ENCODE measurements at regions of chr1 and their contacts with region 1.

Region 1: GRCh38 chr1:100459358-100460114 is 78.4 kb upstream of the GPR88 start:
- DNase-seq: peak; percentile 34 to 62 (median 53)
- ATAC-seq: peak; percentile 87
- H3K4me3 ChIP-seq: no peak overlapping the region
- H3K4me3 Mint-ChIP-seq: peak overlapping the region in 8 of 10 donors; percentile 15 to 65 (median 40)
- H3K27ac ChIP-seq: no peak overlapping the region
- H3K27ac Mint-ChIP-seq: peak overlapping the region; percentile 11 to 93 (median 74)
- H3K4me1 ChIP-seq: peaks cover 18 to 22% of the 10 kb centered on the region in 2 donors
- H3K4me1 Mint-ChIP-seq: peaks cover 21 to 81% (median 59%) of the 10 kb centered on the region in 7 donors
- H3K27me3 ChIP-seq: no peaks in the 10 kb centered on the region
- H3K27me3 Mint-ChIP-seq: no peaks in the 10 kb centered on the region

Region 2: DNA sequence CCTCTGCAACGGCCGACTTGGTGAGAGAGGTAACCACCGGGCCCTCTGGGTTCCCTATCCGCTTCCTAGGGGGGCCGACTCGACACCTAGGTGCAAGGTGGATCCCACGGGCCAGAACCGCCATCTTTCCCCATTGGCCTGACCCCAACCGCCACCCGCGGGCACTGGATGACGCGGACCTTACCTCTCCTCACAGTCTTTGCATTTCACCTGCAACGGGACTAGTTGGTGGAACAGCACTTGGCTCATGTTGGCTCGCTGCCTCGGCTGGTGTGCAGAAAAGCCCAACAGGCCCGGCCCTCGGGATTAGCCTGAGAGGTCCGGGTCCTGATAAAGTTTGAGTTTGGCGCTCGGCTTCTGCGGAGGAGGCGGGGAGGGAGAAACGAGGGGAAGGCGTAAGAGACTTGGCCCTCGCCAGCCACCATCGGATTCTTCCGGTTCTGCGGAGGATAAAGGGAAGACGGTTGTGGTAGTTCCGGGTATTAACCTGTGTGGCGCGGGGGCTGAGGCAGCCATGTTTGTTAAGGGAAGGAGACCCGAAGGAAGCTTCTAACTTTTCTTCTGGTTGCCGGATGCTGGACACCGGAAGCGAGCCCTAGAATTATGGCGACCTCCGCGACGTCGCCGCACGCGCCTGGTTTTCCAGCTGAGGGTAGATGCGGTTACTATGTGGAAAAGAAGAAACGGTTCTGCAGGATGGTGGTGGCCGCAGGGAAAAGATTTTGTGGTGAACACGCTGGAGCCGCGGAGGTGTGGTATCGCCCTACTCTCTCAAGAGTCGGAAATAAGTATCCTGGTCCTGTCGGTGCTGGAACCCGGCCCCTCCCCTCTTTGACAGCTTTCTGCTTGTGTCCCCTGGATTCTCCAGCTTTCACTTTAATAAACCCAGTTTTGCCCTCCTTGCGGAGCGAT is 326.7 kb before region 1 on chr1 and contains the starts of genes SASS6 and TRMT13:
- CTCF ChIA-PET with region 1: no interaction called
- POLR2A ChIA-PET with region 1: no interaction called
- intact Hi-C with region 1: loop called (anchors 2 to 5 kb)
- DNase-seq: peak; percentile 73 to 96 (median 94)
- ATAC-seq: peak; percentile 99
- H3K4me3 ChIP-seq: peak within 1 kb of the TSS; percentile 92
- H3K4me3 Mint-ChIP-seq: peak within 1 kb of the TSS; percentile 90 to 99 (median 98)
- H3K27ac ChIP-seq: peak within 1 kb of the TSS; percentile 74
- H3K27ac Mint-ChIP-seq: peak within 1 kb of the TSS; percentile 86 to 99 (median 96)
- H3K4me1 ChIP-seq: peaks cover 9 to 15% of the 10 kb centered on the region in 2 donors
- H3K4me1 Mint-ChIP-seq: peaks cover 7 to 53% (median 39%) of the 10 kb centered on the region in 7 donors
- H3K27me3 ChIP-seq: no peaks in the 10 kb centered on the region
- H3K27me3 Mint-ChIP-seq: no peaks in the 10 kb centered on the region
- total RNA-seq, gene SASS6: 2.5 to 11.6 (median 5.6) TPM
- total RNA-seq, gene TRMT13: 15.3 to 60.3 (median 23.9) TPM

Region 3: GRCh38 chr1:100265931-100266740 is 193.4 kb before region 1 on chr1 and contains the start of gene RTCA:
- CTCF ChIA-PET with region 1: interaction called, 5 read pairs
- POLR2A ChIA-PET with region 1: interaction called, 9 read pairs
- intact Hi-C with region 1: loop called in 1 of 2 experiments (anchors 1 kb)
- DNase-seq: peak; percentile 91 to 95 (median 94)
- ATAC-seq: peak; percentile 98
- H3K4me3 ChIP-seq: peak within 1 kb of the TSS; percentile 88
- H3K4me3 Mint-ChIP-seq: peak within 1 kb of the TSS; percentile 97 to 100 (median 100)
- H3K27ac ChIP-seq: peak within 1 kb of the TSS; percentile 88
- H3K27ac Mint-ChIP-seq: peak within 1 kb of the TSS; percentile 94 to 99 (median 97)
- H3K4me1 ChIP-seq: peaks cover 25 to 26% of the 10 kb centered on the region in 2 donors
- H3K4me1 Mint-ChIP-seq: peaks cover 23 to 58% (median 51%) of the 10 kb centered on the region in 7 donors
- H3K27me3 ChIP-seq: no peaks in the 10 kb centered on the region
- H3K27me3 Mint-ChIP-seq: peaks cover 0 to 3% (median 0%) of the 10 kb centered on the region in 5 donors
- total RNA-seq, gene RTCA: 33.3 to 47.7 (median 35.8) TPM

Region 4: GRCh38 chr1:100387209-100387608 is 72.3 kb before region 1 on chr1:
- CTCF ChIA-PET with region 1: interaction called, 11 read pairs
- POLR2A ChIA-PET with region 1: interaction called, 10 read pairs
- intact Hi-C with region 1: no loop called
- DNase-seq: no peak
- ATAC-seq: no peak
- H3K4me3 ChIP-seq: peak overlapping the region; percentile 9
- H3K4me3 Mint-ChIP-seq: peak overlapping the region; percentile 53 to 86 (median 78)
- H3K27ac ChIP-seq: peak overlapping the region; percentile 77
- H3K27ac Mint-ChIP-seq: peak overlapping the region; percentile 60 to 96 (median 92)
- H3K4me1 ChIP-seq: peaks cover 56 to 68% of the 10 kb centered on the region in 2 donors
- H3K4me1 Mint-ChIP-seq: peaks cover 39 to 99% (median 90%) of the 10 kb centered on the region in 7 donors
- H3K27me3 ChIP-seq: no peaks in the 10 kb centered on the region
- H3K27me3 Mint-ChIP-seq: no peaks in the 10 kb centered on the region

Region 5: GRCh38 chr1:100443811-100444571 is 15.5 kb before region 1 on chr1:
- CTCF ChIA-PET with region 1: interaction called, 9 read pairs
- POLR2A ChIA-PET with region 1: interaction called, 11 read pairs
- intact Hi-C with region 1: loop called in 1 of 2 experiments (anchors 2 kb)
- DNase-seq: peak in 5 of 9 donors; percentile 31 to 42 (median 36)
- ATAC-seq: peak; percentile 6
- H3K4me3 ChIP-seq: peak overlapping the region; percentile 12
- H3K4me3 Mint-ChIP-seq: peak overlapping the region; percentile 66 to 86 (median 81)
- H3K27ac ChIP-seq: peak overlapping the region; percentile 93
- H3K27ac Mint-ChIP-seq: peak overlapping the region; percentile 92 to 99 (median 98)
- H3K4me1 ChIP-seq: peaks cover 83 to 84% of the 10 kb centered on the region in 2 donors
- H3K4me1 Mint-ChIP-seq: peaks cover 53 to 95% (median 87%) of the 10 kb centered on the region in 7 donors
- H3K27me3 ChIP-seq: no peaks in the 10 kb centered on the region
- H3K27me3 Mint-ChIP-seq: no peaks in the 10 kb centered on the region

Region 6: DNA sequence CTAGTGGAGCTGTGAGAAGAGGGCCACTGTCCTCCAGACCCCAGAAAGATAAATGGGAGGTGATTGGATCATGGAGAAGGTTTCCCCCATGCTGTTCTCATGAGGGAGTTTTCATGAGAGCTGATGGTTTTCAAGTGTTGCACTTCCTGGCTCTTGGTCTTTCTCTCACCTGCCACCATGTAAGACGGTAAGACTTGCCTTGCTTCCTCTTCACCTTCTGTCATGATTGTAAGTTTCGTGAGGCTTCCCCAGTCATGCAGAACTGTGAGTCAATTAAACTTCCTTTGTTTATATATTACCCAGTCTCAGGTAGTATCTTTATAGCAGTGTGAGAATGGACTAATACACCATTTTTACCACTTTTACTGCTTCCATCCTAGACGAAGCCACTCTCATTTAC is 106.0 kb after region 1 on chr1:
- CTCF ChIA-PET with region 1: no interaction called
- POLR2A ChIA-PET with region 1: no interaction called
- intact Hi-C with region 1: no loop called
- DNase-seq: no peak
- ATAC-seq: no peak
- H3K4me3 ChIP-seq: no peak overlapping the region
- H3K4me3 Mint-ChIP-seq: no peak overlapping the region
- H3K27ac ChIP-seq: no peak overlapping the region
- H3K27ac Mint-ChIP-seq: no peak overlapping the region
- H3K4me1 ChIP-seq: no peaks in the 10 kb centered on the region
- H3K4me1 Mint-ChIP-seq: no peaks in the 10 kb centered on the region
- H3K27me3 ChIP-seq: no peaks in the 10 kb centered on the region
- H3K27me3 Mint-ChIP-seq: peaks cover 21 to 41% (median 24%) of the 10 kb centered on the region in 5 donors

Measured in naive thymus-derived CD4-positive, alpha-beta T cell (primary cell).